ENCODE measurements at regions of chrX and their contacts with region 1.

Region 1: GRCh38 chrX:10111364-10112148 is 45.2 kb upstream of the CLCN4 start:
- DNase-seq: peak in 1 of 2 donors; percentile 42
- ATAC-seq: peak; percentile 35 to 66 (median 61)
- H3K4me3 ChIP-seq: no peak overlapping the region
- H3K27ac ChIP-seq: peak overlapping the region in 8 of 10 donors; percentile 3 to 60 (median 48)
- H3K4me1 ChIP-seq: peaks cover 0 to 63% (median 45%) of the 10 kb centered on the region in 9 donors
- H3K27me3 ChIP-seq: no peaks in the 10 kb centered on the region
- CTCF ChIP-seq: no peak

Region 2: DNA sequence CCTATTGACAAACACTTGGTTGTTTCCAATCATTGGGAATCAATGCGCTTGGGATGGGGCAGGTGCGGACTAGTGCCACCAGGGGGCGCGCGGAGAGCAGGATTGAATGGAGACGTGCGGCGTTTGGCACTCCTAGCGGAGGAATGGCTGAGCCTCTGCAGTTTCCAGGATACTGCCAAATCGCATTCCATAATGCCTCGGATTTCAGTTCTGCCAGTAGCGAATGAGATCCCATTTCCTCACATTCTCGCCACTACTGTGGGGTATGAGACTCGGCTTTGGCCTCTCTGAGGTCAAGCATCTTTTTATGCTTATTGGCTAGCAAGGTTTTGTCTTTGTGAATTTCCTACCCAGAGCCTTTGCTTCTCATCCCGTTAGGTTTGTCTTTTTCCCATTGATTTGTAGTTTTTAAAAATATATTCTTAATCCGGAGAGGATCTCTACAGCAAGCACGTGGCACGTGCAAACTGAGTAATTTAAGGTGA is 115.7 kb before region 1 on chrX:
- intact Hi-C with region 1: loop called in 4 of 10 experiments (anchors 2 to 5 kb)
- DNase-seq: peak; percentile 82 to 86
- ATAC-seq: peak; percentile 78 to 97 (median 93)
- H3K4me3 ChIP-seq: no peak overlapping the region
- H3K27ac ChIP-seq: no peak overlapping the region
- H3K4me1 ChIP-seq: peaks cover 0 to 4% (median 0%) of the 10 kb centered on the region in 9 donors
- H3K27me3 ChIP-seq: peaks cover 0 to 4% (median 0%) of the 10 kb centered on the region in 7 donors
- CTCF ChIP-seq: peak; percentile 84 to 97 (median 91)

Region 3: DNA sequence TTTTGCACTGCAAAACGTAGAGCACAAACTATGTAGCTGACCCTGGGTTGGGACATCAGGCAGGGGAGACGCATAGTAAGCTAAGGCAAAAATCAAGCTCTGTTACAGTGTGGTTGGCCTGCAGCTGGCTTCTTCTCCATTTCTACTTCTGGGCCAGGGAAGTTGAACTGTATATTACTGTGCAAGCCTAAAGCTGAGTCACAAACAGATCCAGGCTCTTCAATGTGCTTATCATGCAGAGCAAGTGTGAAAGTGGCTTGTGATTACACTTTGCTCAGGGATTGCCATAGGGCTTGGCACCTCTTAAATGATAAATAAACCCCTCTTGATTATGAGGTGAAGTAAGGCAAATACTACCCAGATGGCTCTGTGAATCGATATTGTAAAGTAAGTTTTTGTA is 103.9 kb before region 1 on chrX:
- intact Hi-C with region 1: loop called in 3 of 10 experiments (anchors 5 kb)
- DNase-seq: no peak
- ATAC-seq: peak in 6 of 8 donors; percentile 16 to 62 (median 42)
- H3K4me3 ChIP-seq: no peak overlapping the region
- H3K27ac ChIP-seq: peak overlapping the region in 4 of 10 donors; percentile 9 to 53 (median 26)
- H3K4me1 ChIP-seq: peaks cover 0 to 29% (median 10%) of the 10 kb centered on the region in 9 donors
- H3K27me3 ChIP-seq: peaks cover 0 to 20% (median 0%) of the 10 kb centered on the region in 7 donors
- CTCF ChIP-seq: no peak

Region 4: DNA sequence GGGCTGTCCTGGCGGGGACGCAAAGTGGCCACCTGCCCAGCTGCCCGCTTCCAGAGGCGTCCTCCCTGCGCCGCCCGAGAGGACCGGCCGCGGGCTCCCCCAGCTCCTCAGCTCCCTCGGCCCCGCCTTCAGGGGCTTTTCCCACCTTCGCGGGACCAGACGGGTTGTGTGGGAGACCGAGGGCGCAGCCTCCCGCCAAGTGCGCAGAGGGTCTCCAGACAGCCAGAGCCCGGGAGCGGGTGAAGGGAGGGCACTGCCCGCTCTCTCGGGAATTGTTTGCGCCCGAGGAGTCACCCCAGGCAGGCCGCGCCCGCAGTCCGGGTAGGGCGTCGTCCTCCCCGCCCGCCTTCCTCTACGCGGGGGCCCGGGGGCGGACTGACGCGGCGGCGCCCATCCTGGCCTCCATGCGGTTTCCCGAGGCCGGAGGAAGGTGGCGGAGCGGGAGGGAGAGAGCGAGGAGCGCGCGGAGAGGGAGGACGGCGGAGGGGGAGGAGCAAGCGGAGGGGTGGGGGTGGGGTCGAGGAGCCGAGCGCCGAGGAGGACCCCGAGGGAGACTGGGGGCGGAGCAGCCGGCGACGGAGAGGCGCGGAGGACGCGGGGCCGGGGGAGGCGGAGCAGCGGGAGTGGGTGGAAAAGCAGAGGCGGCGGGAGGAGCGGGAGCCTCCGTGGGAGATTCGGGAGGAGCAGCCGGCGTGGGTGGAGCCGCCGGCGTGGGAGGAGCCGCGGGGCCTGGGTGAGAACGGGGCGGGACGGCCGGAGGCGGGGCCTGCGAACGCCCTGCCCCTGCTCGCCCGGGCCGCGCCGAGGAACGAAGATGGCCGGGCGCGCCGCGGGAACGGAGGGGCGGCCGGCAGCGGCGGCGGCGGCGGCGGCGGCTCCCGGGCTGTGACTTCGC is 96.8 kb before region 1 on chrX:
- intact Hi-C with region 1: loop called in 5 of 10 experiments (anchors 5 kb)
- DNase-seq: peak; percentile 87 to 93
- ATAC-seq: peak; percentile 88 to 96 (median 92)
- H3K4me3 ChIP-seq: peak overlapping the region; percentile 47 to 65 (median 60)
- H3K27ac ChIP-seq: peak overlapping the region; percentile 84 to 95 (median 92)
- H3K4me1 ChIP-seq: peaks cover 2 to 57% (median 33%) of the 10 kb centered on the region in 9 donors
- H3K27me3 ChIP-seq: peaks cover 0 to 63% (median 0%) of the 10 kb centered on the region in 7 donors
- CTCF ChIP-seq: no peak

Region 5: GRCh38 chrX:10052906-10053625 is 58.5 kb before region 1 on chrX:
- intact Hi-C with region 1: loop called in 1 of 10 experiments (anchors 2 kb)
- DNase-seq: peak in 1 of 2 donors; percentile 43
- ATAC-seq: peak; percentile 54 to 90 (median 75)
- H3K4me3 ChIP-seq: no peak overlapping the region
- H3K27ac ChIP-seq: peak overlapping the region in 8 of 10 donors; percentile 52 to 73 (median 63)
- H3K4me1 ChIP-seq: peaks cover 0 to 65% (median 53%) of the 10 kb centered on the region in 9 donors
- H3K27me3 ChIP-seq: peaks cover 0 to 3% (median 0%) of the 10 kb centered on the region in 7 donors
- CTCF ChIP-seq: peak in 1 of 9 donors; percentile 9